ENCODE measurements at regions of chr13 and their contacts with region 1.

Region 1: GRCh38 chr13:36420437-36420891 is 11.8 kb upstream of the CCNA1 start:
- DNase-seq: peak; percentile 78
- H3K4me3 Mint-ChIP-seq: no peak overlapping the region
- H3K27ac Mint-ChIP-seq: no peak overlapping the region
- H3K4me1 Mint-ChIP-seq: peaks cover 28% of the 10 kb centered on the region
- H3K27me3 Mint-ChIP-seq: peaks cover 39% of the 10 kb centered on the region

Region 2: DNA sequence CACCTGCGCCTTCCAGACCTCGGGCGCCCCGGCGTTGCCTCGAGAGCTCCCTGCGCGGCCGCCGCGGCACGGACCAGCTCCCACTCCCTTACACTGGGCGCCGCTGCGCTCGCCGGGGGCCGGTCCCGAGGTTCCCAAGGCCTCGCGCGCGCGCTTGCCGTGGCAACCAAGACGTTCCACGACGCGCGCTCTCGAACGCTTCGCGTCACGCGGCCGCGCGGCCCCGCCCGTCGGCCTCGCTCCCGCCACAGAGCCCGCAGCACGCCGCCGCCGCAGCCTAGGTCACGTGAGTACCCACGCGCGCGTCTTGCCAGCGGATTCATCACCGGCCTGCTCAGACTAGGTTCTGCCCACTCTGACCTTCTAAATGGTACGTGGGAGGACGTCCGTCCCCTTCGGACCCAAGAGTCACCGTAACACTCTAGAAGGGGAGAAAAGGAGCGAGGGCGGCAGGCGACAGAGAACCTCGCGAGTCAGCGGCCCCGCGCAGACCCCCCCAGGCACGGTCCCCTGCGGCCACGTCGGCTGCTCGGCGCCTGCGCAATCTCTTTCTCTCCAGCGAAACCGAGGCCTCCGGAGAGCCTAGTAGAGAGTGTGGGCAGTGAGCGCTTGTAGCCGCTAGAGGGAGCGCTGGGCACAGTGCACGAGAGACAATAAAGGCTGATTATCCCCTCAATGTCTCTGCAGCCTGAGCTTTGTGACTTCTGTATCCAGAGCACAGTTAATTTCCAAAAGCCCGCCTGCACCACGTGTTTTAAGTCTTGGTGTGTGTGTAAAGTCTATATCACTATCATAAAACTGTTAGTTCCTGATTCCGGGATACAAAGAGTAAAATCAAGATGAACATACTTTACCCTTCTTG is 74.0 kb before region 1 on chr13 and contains the start of gene SPART:
- CTCF ChIA-PET with region 1: interaction called, 12 read pairs
- POLR2A ChIA-PET with region 1: interaction called, 3 read pairs
- DNase-seq: peak; percentile 93
- H3K4me3 Mint-ChIP-seq: peak within 1 kb of the TSS; percentile 90
- H3K27ac Mint-ChIP-seq: peak within 1 kb of the TSS; percentile 98
- H3K4me1 Mint-ChIP-seq: peaks cover 28% of the 10 kb centered on the region
- H3K27me3 Mint-ChIP-seq: no peaks in the 10 kb centered on the region
- total RNA-seq, gene SPART: 20.9 to 24.9 TPM

Region 3: DNA sequence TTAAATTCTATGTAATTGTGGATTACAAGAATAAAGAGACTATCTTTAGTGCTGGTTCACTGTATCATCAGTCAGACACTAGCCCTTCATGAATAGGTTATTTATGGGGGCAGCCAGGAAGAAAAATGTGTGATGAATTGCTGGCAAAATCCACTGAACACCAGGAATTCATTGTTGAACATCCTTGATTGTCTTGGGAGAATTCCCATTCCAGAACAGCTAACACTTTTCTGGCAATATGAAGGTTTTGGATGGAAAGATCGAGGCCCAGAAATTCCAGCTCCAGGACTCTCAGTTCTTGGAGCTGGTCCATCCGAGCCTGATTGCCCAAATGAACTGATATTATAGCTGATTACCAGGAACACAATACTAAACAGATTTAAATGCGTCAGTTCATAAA is 62.8 kb before region 1 on chr13:
- CTCF ChIA-PET with region 1: no interaction called
- POLR2A ChIA-PET with region 1: no interaction called
- DNase-seq: no peak
- H3K4me3 Mint-ChIP-seq: no peak overlapping the region
- H3K27ac Mint-ChIP-seq: no peak overlapping the region
- H3K4me1 Mint-ChIP-seq: peaks cover 3% of the 10 kb centered on the region
- H3K27me3 Mint-ChIP-seq: peaks cover 4% of the 10 kb centered on the region